ENCODE measurements at regions of chr17 and their contacts with region 1.

Region 1: DNA sequence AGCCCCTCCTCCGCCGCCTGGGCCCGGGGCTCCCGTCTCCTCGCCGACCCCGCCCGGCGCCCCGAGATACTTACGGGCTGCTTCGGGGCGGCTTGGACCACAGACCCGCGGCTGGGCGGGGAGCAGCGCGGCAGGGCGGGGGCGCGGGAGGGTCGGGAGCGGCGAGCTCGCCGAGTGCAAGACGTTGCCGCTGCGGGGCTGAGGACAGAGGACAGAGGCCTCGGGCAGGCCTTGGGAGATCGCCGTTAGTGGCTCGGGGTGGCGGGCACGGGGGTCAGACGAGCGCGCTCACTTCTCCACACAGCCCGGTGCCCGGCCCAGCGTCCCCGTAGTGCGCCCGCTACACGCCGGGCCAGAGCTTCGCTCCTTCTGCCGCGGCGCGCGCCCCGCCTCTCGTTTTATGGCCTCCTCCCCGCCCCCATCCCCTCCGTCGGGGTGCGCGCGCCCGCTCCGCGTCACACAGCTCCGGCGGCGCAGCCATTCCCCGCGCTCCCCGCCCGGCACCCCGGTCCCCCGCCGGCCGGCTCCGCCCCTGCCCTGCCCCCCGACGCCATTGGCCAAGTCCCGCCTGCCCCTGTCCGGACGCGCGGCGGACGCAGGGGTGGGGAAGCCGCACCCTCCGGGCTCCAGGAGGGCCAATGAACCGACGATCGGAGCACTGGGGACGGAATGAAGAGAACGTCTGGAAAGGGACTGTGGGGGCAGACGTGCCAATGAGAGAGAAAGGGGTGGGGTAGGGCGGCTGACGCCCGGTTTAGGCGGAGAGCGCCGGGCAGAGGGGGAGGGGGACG is at the start of gene TOB1:
- DNase-seq: peak; percentile 92
- H3K4me3 Mint-ChIP-seq: peak within 1 kb of the TSS; percentile 98
- H3K27ac Mint-ChIP-seq: peak within 1 kb of the TSS; percentile 97
- H3K4me1 Mint-ChIP-seq: peaks cover 42% of the 10 kb centered on the region
- H3K27me3 Mint-ChIP-seq: no peaks in the 10 kb centered on the region
- total RNA-seq, gene TOB1: 28.5 and 28.9 TPM in 2 replicates

Region 2: GRCh38 chr17:50707289-50708049 is 158.7 kb before region 1 on chr17 and contains the start of gene ANKRD40:
- intact Hi-C with region 1: loop called (anchors 5 kb)
- DNase-seq: peak; percentile 91
- H3K4me3 Mint-ChIP-seq: peak within 1 kb of the TSS; percentile 94
- H3K27ac Mint-ChIP-seq: peak within 1 kb of the TSS; percentile 95
- H3K4me1 Mint-ChIP-seq: peaks cover 28% of the 10 kb centered on the region
- H3K27me3 Mint-ChIP-seq: peaks cover 3% of the 10 kb centered on the region
- total RNA-seq, gene ANKRD40: 37.8 and 39.4 TPM in 2 replicates

Region 3: DNA sequence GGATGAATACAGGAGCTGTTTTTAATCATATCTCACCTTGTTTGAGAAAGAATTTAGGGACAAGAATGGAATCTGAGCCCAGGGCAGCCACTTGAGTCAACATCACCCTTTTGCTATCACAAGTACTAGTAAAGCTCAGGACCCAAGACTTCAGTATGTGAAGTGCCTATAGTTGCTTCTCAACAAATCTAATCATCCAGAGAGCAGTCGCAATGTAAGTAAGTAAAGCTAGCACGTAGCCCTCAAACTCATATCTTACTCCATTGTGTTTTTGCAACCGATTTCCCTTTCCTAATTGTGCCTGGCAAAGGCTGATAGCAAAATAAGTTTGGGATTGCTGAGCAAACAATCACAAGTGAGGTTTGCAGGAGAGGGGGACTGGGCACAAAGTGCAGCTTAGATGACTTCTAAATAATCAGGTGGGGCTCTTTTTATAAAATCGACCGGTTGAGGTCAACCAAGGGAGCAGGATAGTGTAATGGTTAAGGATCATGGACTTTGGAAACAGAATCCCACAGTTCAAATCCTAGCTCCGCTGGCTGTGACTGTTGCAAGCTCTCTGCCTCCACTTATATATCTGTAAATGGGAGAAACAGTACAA is 13.1 kb before region 1 on chr17:
- intact Hi-C with region 1: loop called (anchors 1 kb)
- DNase-seq: no peak
- H3K4me3 Mint-ChIP-seq: no peak overlapping the region
- H3K27ac Mint-ChIP-seq: no peak overlapping the region
- H3K4me1 Mint-ChIP-seq: peaks cover 16% of the 10 kb centered on the region
- H3K27me3 Mint-ChIP-seq: peaks cover 34% of the 10 kb centered on the region

Region 4: GRCh38 chr17:50944054-50944901 is 78.1 kb after region 1 on chr17:
- intact Hi-C with region 1: loop called (anchors 1 kb)
- DNase-seq: peak; percentile 72
- H3K4me3 Mint-ChIP-seq: peak overlapping the region; percentile 63
- H3K27ac Mint-ChIP-seq: peak overlapping the region; percentile 64
- H3K4me1 Mint-ChIP-seq: peaks cover 12% of the 10 kb centered on the region
- H3K27me3 Mint-ChIP-seq: no peaks in the 10 kb centered on the region

Region 5: GRCh38 chr17:51153210-51154072 is 287.3 kb after region 1 on chr17 and contains the start of gene NME1:
- intact Hi-C with region 1: loop called (anchors 2 kb)
- DNase-seq: peak; percentile 99
- H3K4me3 Mint-ChIP-seq: no peak within 1 kb of the TSS
- H3K27ac Mint-ChIP-seq: no peak within 1 kb of the TSS
- H3K4me1 Mint-ChIP-seq: peaks cover 19% of the 10 kb centered on the region
- H3K27me3 Mint-ChIP-seq: no peaks in the 10 kb centered on the region
- total RNA-seq, gene NME1: 360 and 373 TPM in 2 replicates